Dendritic cell treated with granulocyte-macrophage colony-stimulating factor and Interleukin-4, amounts not matched to agents 40 ng/mL and 50 ng/mL, for 4 days (primary cell): ENCODE measurements at regions of chr3 and their contacts with region 1.

Region 1: DNA sequence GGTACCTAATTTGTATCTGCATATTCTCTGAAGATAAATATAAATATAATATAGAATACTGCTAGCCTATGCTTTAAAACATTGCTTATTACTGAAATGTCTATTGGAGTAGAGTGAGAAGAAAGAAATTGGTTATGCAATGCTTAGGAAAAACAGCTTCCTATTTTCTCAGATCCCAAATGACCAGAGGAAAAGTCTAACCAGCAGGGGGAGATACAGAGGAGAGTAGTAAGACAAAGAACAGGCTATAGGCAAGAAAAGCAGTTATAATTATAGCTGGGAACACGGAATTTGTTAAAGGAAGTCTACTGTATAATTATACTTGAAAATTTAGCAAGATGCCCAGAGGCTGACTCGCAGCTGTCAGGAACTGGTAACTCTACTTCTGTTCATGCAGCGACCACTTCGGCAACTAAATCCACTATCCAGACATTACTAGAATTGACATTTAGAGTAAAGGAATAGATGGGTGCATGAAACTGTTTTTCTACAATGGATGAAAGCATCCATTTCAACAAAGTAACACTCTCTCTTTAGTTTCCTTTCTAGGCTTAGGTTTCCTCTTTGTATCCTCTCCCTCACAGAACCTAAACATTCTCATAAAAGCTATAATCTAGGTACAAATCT is 97.2 kb downstream of the TBC1D5 start:
- H3K4me3 Mint-ChIP-seq: no peak overlapping the region
- H3K27ac Mint-ChIP-seq: no peak overlapping the region
- H3K4me1 Mint-ChIP-seq: no peaks in the 10 kb centered on the region
- H3K27me3 Mint-ChIP-seq: no peaks in the 10 kb centered on the region

Region 2: GRCh38 chr3:17442332-17443049 is 202.7 kb before region 1 on chr3:
- intact Hi-C with region 1: no loop called
- H3K4me3 Mint-ChIP-seq: no peak overlapping the region
- H3K27ac Mint-ChIP-seq: peak overlapping the region; percentile 3
- H3K4me1 Mint-ChIP-seq: peaks cover 9% of the 10 kb centered on the region
- H3K27me3 Mint-ChIP-seq: no peaks in the 10 kb centered on the region

Region 3: GRCh38 chr3:17500618-17501017 is 144.6 kb before region 1 on chr3:
- intact Hi-C with region 1: no loop called
- H3K4me3 Mint-ChIP-seq: no peak overlapping the region
- H3K27ac Mint-ChIP-seq: no peak overlapping the region
- H3K4me1 Mint-ChIP-seq: no peaks in the 10 kb centered on the region
- H3K27me3 Mint-ChIP-seq: no peaks in the 10 kb centered on the region

Region 4: GRCh38 chr3:17717411-17717810 is 72.2 kb after region 1 on chr3:
- intact Hi-C with region 1: no loop called
- H3K4me3 Mint-ChIP-seq: no peak overlapping the region
- H3K27ac Mint-ChIP-seq: peak overlapping the region; percentile 25
- H3K4me1 Mint-ChIP-seq: peaks cover 11% of the 10 kb centered on the region
- H3K27me3 Mint-ChIP-seq: no peaks in the 10 kb centered on the region

Region 5: GRCh38 chr3:17742108-17742879 is 97.1 kb after region 1 on chr3 and contains the start of gene TBC1D5:
- intact Hi-C with region 1: loop called (anchors 5 kb)
- H3K4me3 Mint-ChIP-seq: peak within 1 kb of the TSS; percentile 96
- H3K27ac Mint-ChIP-seq: peak within 1 kb of the TSS; percentile 99
- H3K4me1 Mint-ChIP-seq: peaks cover 61% of the 10 kb centered on the region
- H3K27me3 Mint-ChIP-seq: no peaks in the 10 kb centered on the region